CD4-positive, alpha-beta memory T cell (primary cell): ENCODE measurements at regions of chr1 and their contacts with region 1.

Region 1: GRCh38 chr1:153670859-153671627 is at the start of gene ILF2:
- DNase-seq: peak; percentile 96 to 100 (median 99)
- H3K4me3 ChIP-seq: peak within 1 kb of the TSS; percentile 72 to 98
- H3K4me3 Mint-ChIP-seq: no peak within 1 kb of the TSS
- H3K27ac ChIP-seq: peak within 1 kb of the TSS; percentile 90
- H3K27ac Mint-ChIP-seq: peak within 1 kb of the TSS in 2 of 7 donors; percentile 68 to 77
- H3K4me1 ChIP-seq: peaks cover 26% of the 10 kb centered on the region
- H3K4me1 Mint-ChIP-seq: peaks cover 11 to 16% (median 13%) of the 10 kb centered on the region in 4 donors
- H3K27me3 ChIP-seq: no peaks in the 10 kb centered on the region
- H3K27me3 Mint-ChIP-seq: no peaks in the 10 kb centered on the region
- total RNA-seq, gene ILF2: 82.3 to 87.8 TPM

Region 2: GRCh38 chr1:153532769-153533599 is 138.1 kb before region 1 on chr1:
- CTCF ChIA-PET with region 1: interaction called, 3 read pairs
- POLR2A ChIA-PET with region 1: interaction called, 4 read pairs
- intact Hi-C with region 1: loop called (anchors 2 kb)
- DNase-seq: peak; percentile 76 to 82 (median 78)
- H3K4me3 ChIP-seq: peak overlapping the region; percentile 55 to 79
- H3K4me3 Mint-ChIP-seq: peak overlapping the region; percentile 88 to 98 (median 96)
- H3K27ac ChIP-seq: peak overlapping the region; percentile 92
- H3K27ac Mint-ChIP-seq: peak overlapping the region; percentile 88 to 98 (median 94)
- H3K4me1 ChIP-seq: peaks cover 62% of the 10 kb centered on the region
- H3K4me1 Mint-ChIP-seq: peaks cover 44 to 80% (median 57%) of the 10 kb centered on the region in 4 donors
- H3K27me3 ChIP-seq: no peaks in the 10 kb centered on the region
- H3K27me3 Mint-ChIP-seq: no peaks in the 10 kb centered on the region

Region 3: GRCh38 chr1:153598309-153599172 is 72.5 kb before region 1 on chr1:
- CTCF ChIA-PET with region 1: no interaction called
- POLR2A ChIA-PET with region 1: no interaction called
- intact Hi-C with region 1: no loop called
- DNase-seq: no peak
- H3K4me3 ChIP-seq: no peak overlapping the region
- H3K4me3 Mint-ChIP-seq: no peak overlapping the region
- H3K27ac ChIP-seq: no peak overlapping the region
- H3K27ac Mint-ChIP-seq: peak overlapping the region in 3 of 7 donors; percentile 56 to 88 (median 68)
- H3K4me1 ChIP-seq: peaks cover 7% of the 10 kb centered on the region
- H3K4me1 Mint-ChIP-seq: peaks cover 0 to 16% (median 5%) of the 10 kb centered on the region in 4 donors
- H3K27me3 ChIP-seq: no peaks in the 10 kb centered on the region
- H3K27me3 Mint-ChIP-seq: no peaks in the 10 kb centered on the region

Region 4: GRCh38 chr1:153633716-153634665 is 37.1 kb before region 1 on chr1 and contains the start of gene CHTOP:
- CTCF ChIA-PET with region 1: interaction called, 5 read pairs
- POLR2A ChIA-PET with region 1: interaction called, 37 read pairs
- intact Hi-C with region 1: loop called (anchors 1 kb)
- DNase-seq: peak; percentile 96 to 98 (median 97)
- H3K4me3 ChIP-seq: peak within 1 kb of the TSS; percentile 99
- H3K4me3 Mint-ChIP-seq: peak within 1 kb of the TSS; percentile 94 to 100 (median 98)
- H3K27ac ChIP-seq: peak within 1 kb of the TSS; percentile 100
- H3K27ac Mint-ChIP-seq: peak within 1 kb of the TSS; percentile 98 to 100 (median 100)
- H3K4me1 ChIP-seq: peaks cover 35% of the 10 kb centered on the region
- H3K4me1 Mint-ChIP-seq: peaks cover 26 to 51% (median 39%) of the 10 kb centered on the region in 4 donors
- H3K27me3 ChIP-seq: no peaks in the 10 kb centered on the region
- H3K27me3 Mint-ChIP-seq: no peaks in the 10 kb centered on the region
- total RNA-seq, gene CHTOP: 144 to 149 TPM

Region 5: GRCh38 chr1:153727463-153728304 is 56.6 kb after region 1 on chr1 and contains the start of gene INTS3:
- CTCF ChIA-PET with region 1: interaction called, 3 read pairs
- POLR2A ChIA-PET with region 1: interaction called, 15 read pairs
- intact Hi-C with region 1: loop called (anchors 1 kb)
- DNase-seq: peak; percentile 98 to 100 (median 99)
- H3K4me3 ChIP-seq: peak within 1 kb of the TSS; percentile 79 to 98
- H3K4me3 Mint-ChIP-seq: peak within 1 kb of the TSS; percentile 88 to 96 (median 93)
- H3K27ac ChIP-seq: peak within 1 kb of the TSS; percentile 93
- H3K27ac Mint-ChIP-seq: peak within 1 kb of the TSS; percentile 93 to 99 (median 97)
- H3K4me1 ChIP-seq: peaks cover 32% of the 10 kb centered on the region
- H3K4me1 Mint-ChIP-seq: peaks cover 19 to 36% (median 29%) of the 10 kb centered on the region in 4 donors
- H3K27me3 ChIP-seq: no peaks in the 10 kb centered on the region
- H3K27me3 Mint-ChIP-seq: no peaks in the 10 kb centered on the region
- total RNA-seq, gene INTS3: 49.1 to 53.0 TPM

Region 6: GRCh38 chr1:153922972-153923925 is 252.2 kb after region 1 on chr1 and contains the start of gene GATAD2B:
- CTCF ChIA-PET with region 1: no interaction called
- POLR2A ChIA-PET with region 1: interaction called, 3 read pairs
- intact Hi-C with region 1: loop called (anchors 2 kb)
- DNase-seq: peak; percentile 99 to 100 (median 100)
- H3K4me3 ChIP-seq: peak within 1 kb of the TSS; percentile 80 to 99
- H3K4me3 Mint-ChIP-seq: peak within 1 kb of the TSS; percentile 94 to 97 (median 95)
- H3K27ac ChIP-seq: peak within 1 kb of the TSS; percentile 97
- H3K27ac Mint-ChIP-seq: peak within 1 kb of the TSS; percentile 96 to 99 (median 97)
- H3K4me1 ChIP-seq: peaks cover 44% of the 10 kb centered on the region
- H3K4me1 Mint-ChIP-seq: peaks cover 34 to 55% (median 43%) of the 10 kb centered on the region in 4 donors
- H3K27me3 ChIP-seq: no peaks in the 10 kb centered on the region
- H3K27me3 Mint-ChIP-seq: no peaks in the 10 kb centered on the region
- total RNA-seq, gene GATAD2B: 97.0 to 104 TPM

Region 7: GRCh38 chr1:154272217-154272998 is 601.4 kb after region 1 on chr1 and contains the start of gene HAX1:
- CTCF ChIA-PET with region 1: no interaction called
- POLR2A ChIA-PET with region 1: no interaction called
- intact Hi-C with region 1: loop called (anchors 1 kb)
- DNase-seq: peak; percentile 93 to 99 (median 98)
- H3K4me3 ChIP-seq: peak within 1 kb of the TSS; percentile 66 to 85
- H3K4me3 Mint-ChIP-seq: peak within 1 kb of the TSS; percentile 89 to 98 (median 97)
- H3K27ac ChIP-seq: peak within 1 kb of the TSS; percentile 88
- H3K27ac Mint-ChIP-seq: peak within 1 kb of the TSS; percentile 97 to 99 (median 99)
- H3K4me1 ChIP-seq: peaks cover 27% of the 10 kb centered on the region
- H3K4me1 Mint-ChIP-seq: peaks cover 22 to 38% (median 29%) of the 10 kb centered on the region in 4 donors
- H3K27me3 ChIP-seq: no peaks in the 10 kb centered on the region
- H3K27me3 Mint-ChIP-seq: no peaks in the 10 kb centered on the region
- total RNA-seq, gene HAX1: 110 to 121 TPM